Tibial artery (tissue), 4 donors: ENCODE measurements at regions of chr6 and their contacts with region 1.

Region 1: GRCh38 chr6:39772559-39773273 is 19.5 kb upstream of the DAAM2 start:
- DNase-seq: peak in 1 of 2 donors; percentile 76
- H3K4me3 ChIP-seq: no peak overlapping the region
- H3K27ac ChIP-seq: peak overlapping the region; percentile 66 to 67
- H3K4me1 ChIP-seq: peaks cover 0 to 41% (median 21%) of the 10 kb centered on the region in 4 donors
- H3K27me3 ChIP-seq: no peaks in the 10 kb centered on the region
- CTCF ChIP-seq: no peak

Region 2: DNA sequence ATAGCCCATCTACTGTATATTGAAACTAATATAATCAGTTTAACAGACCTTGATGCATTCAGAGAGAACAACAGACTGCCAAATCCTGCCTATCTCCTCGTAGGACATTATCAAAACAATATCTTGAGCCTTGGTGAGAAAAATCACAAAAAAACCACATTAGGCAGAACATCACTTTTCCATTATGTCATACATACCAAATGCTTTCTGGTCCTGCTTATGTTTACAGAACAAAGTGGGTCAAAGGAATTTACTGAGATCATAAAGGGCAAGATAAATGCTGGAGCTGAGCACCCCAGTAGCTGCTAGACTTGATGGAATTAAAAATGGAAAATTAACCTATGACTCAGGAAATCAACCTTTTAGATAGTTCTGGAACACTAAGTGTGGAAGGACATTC is 255.0 kb before region 1 on chr6:
- intact Hi-C with region 1: no loop called
- DNase-seq: no peak
- H3K4me3 ChIP-seq: no peak overlapping the region
- H3K27ac ChIP-seq: no peak overlapping the region
- H3K4me1 ChIP-seq: peaks cover 0 to 22% (median 0%) of the 10 kb centered on the region in 4 donors
- H3K27me3 ChIP-seq: no peaks in the 10 kb centered on the region
- CTCF ChIP-seq: no peak

Region 3: DNA sequence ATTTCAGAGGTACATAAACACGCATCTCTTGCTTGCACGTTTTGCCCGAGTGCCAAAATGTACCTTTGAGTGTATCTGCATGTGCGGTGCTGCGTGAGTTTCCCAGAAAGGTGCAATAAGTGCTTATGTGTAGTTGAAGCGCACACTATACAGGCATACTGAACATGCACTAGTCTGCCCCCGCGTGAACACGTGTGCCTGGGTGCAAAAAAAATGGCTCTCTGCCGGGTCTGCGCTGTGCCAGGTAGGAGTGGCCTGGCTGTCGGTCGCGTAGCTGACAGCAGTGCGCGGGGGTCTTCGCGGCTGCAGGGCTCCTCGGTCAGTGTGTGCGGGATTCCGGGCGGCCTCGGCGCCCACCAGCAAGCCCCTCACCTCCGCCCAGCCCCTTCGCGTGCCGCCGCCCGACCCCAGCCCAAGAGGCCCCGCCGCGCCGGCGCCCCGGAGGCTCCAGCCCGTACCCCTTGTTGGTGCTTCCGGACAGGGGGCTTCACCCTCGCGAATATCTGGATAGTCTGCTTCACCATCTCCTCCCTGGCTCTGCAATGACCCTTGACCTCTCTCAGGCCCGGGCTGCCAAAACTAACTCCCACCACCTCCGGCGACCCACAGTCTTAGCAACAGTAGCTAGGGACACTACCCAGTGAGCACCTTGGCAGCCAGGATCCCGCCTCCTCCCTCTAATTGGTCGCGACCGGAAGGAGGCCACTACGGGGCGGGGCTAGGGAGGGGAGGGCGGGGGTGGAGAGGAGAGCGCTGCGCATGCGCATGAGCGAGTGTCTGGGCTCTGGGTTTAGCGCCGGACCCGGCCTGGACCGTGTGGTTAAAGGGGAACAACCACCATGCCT is 47.7 kb before region 1 on chr6 and contains the start of gene KIF6:
- intact Hi-C with region 1: loop called (anchors 10 kb)
- DNase-seq: peak; percentile 91 to 96
- H3K4me3 ChIP-seq: peak within 1 kb of the TSS; percentile 68 to 98
- H3K27ac ChIP-seq: peak within 1 kb of the TSS; percentile 67 to 74
- H3K4me1 ChIP-seq: peaks cover 0 to 5% (median 1%) of the 10 kb centered on the region in 4 donors
- H3K27me3 ChIP-seq: no peaks in the 10 kb centered on the region
- CTCF ChIP-seq: peak in 1 of 2 experiments; percentile 8

Region 4: GRCh38 chr6:39997101-39997623 is 224.4 kb after region 1 on chr6:
- intact Hi-C with region 1: no loop called
- DNase-seq: no peak
- H3K4me3 ChIP-seq: no peak overlapping the region
- H3K27ac ChIP-seq: no peak overlapping the region
- H3K4me1 ChIP-seq: peaks cover 0 to 7% (median 2%) of the 10 kb centered on the region in 4 donors
- H3K27me3 ChIP-seq: no peaks in the 10 kb centered on the region
- CTCF ChIP-seq: no peak

Region 5: DNA sequence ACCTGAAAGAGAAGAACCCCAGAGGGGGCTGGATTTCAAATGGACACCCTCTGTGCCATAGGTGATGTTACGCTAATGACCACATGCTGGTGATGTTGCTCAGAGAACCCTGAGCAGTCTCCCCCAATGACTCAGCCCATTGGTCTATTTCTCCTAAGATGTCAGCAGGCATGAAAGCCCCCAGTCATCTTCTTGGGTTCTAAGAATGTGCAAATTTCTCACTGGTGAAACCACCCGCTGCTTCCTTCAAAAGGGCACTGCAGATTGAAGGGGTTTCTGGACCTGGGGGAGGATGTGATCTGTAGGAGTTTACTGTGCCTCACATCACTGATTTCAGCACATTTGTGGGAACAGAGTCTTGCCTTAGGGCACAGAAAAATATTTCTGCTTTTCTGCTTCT is 460.0 kb after region 1 on chr6:
- intact Hi-C with region 1: no loop called
- DNase-seq: no peak
- H3K4me3 ChIP-seq: no peak overlapping the region
- H3K27ac ChIP-seq: no peak overlapping the region
- H3K4me1 ChIP-seq: no peaks in the 10 kb centered on the region
- H3K27me3 ChIP-seq: peaks cover 0 to 31% of the 10 kb centered on the region in 2 donors
- CTCF ChIP-seq: no peak